Activated CD8-positive, alpha-beta memory T cell treated with anti-CD3 and anti-CD28 coated beads, Interleukin-2, amount 10 ng/mL, durations not matched to agents 7 days and 5 days (primary cell): ENCODE measurements at regions of chr15 and their contacts with region 1.

Region 1: GRCh38 chr15:40857601-40858341 is 13.9 kb downstream of the SPINT1 start:
- DNase-seq: peak; percentile 89
- ATAC-seq: peak; percentile 91
- H3K4me3 Mint-ChIP-seq: no peak overlapping the region
- H3K27ac Mint-ChIP-seq: no peak overlapping the region
- H3K4me1 Mint-ChIP-seq: peaks cover 20% of the 10 kb centered on the region
- H3K27me3 Mint-ChIP-seq: peaks cover 6% of the 10 kb centered on the region

Region 2: GRCh38 chr15:40694688-40695468 is 162.9 kb before region 1 on chr15 and contains the start of gene RAD51:
- CTCF ChIA-PET with region 1: interaction called, 10 read pairs
- DNase-seq: peak; percentile 95
- ATAC-seq: peak; percentile 94
- H3K4me3 Mint-ChIP-seq: peak within 1 kb of the TSS; percentile 98
- H3K27ac Mint-ChIP-seq: peak within 1 kb of the TSS; percentile 100
- H3K4me1 Mint-ChIP-seq: peaks cover 41% of the 10 kb centered on the region
- H3K27me3 Mint-ChIP-seq: no peaks in the 10 kb centered on the region
- total RNA-seq, gene RAD51: 73.0 to 83.3 TPM

Region 3: DNA sequence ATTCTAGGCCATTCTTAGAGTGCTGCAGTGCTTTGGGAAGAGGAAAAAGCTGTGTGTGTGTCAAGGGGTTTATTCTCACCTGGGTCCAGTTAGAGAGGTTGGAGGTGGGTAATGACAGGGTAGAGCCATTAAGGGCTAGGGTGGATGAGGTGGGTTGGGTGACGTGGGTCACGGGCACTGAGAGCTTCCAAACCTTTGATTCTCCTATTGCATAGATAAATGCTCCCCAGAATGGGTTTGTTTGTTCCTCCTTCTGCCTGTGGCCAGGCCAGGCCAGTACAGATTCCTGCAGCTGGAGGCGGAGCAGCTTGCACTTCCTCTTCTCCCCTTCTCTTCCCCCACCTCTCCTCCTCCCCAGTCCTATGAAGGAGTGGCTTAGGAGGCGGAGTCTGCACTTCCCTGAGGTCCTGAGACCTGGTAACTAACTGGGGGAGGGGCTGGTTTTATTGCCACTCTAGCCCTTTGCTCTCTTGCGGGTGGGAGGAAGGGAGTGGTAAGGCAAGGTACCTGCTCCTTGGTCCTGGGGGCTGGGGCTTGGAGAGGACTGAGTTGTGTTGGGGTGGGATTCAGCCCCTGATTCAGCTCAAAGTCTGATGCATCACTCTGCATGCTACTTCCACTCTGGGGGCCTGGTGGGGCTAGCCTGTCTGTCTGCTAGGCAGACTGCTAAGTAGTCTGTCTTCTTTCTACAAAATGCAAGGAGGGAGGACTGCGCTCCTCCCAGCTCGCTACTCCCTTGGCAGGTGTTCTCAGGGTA is 10.4 kb before region 1 on chr15:
- CTCF ChIA-PET with region 1: interaction called, 37 read pairs
- DNase-seq: no peak
- ATAC-seq: no peak
- H3K4me3 Mint-ChIP-seq: no peak overlapping the region
- H3K27ac Mint-ChIP-seq: no peak overlapping the region
- H3K4me1 Mint-ChIP-seq: peaks cover 25% of the 10 kb centered on the region
- H3K27me3 Mint-ChIP-seq: peaks cover 16% of the 10 kb centered on the region

Region 4: GRCh38 chr15:40881351-40881750 is 23.6 kb after region 1 on chr15:
- CTCF ChIA-PET with region 1: interaction called, 180 read pairs
- DNase-seq: no peak
- ATAC-seq: no peak
- H3K4me3 Mint-ChIP-seq: no peak overlapping the region
- H3K27ac Mint-ChIP-seq: no peak overlapping the region
- H3K4me1 Mint-ChIP-seq: peaks cover 27% of the 10 kb centered on the region
- H3K27me3 Mint-ChIP-seq: peaks cover 2% of the 10 kb centered on the region

Region 5: DNA sequence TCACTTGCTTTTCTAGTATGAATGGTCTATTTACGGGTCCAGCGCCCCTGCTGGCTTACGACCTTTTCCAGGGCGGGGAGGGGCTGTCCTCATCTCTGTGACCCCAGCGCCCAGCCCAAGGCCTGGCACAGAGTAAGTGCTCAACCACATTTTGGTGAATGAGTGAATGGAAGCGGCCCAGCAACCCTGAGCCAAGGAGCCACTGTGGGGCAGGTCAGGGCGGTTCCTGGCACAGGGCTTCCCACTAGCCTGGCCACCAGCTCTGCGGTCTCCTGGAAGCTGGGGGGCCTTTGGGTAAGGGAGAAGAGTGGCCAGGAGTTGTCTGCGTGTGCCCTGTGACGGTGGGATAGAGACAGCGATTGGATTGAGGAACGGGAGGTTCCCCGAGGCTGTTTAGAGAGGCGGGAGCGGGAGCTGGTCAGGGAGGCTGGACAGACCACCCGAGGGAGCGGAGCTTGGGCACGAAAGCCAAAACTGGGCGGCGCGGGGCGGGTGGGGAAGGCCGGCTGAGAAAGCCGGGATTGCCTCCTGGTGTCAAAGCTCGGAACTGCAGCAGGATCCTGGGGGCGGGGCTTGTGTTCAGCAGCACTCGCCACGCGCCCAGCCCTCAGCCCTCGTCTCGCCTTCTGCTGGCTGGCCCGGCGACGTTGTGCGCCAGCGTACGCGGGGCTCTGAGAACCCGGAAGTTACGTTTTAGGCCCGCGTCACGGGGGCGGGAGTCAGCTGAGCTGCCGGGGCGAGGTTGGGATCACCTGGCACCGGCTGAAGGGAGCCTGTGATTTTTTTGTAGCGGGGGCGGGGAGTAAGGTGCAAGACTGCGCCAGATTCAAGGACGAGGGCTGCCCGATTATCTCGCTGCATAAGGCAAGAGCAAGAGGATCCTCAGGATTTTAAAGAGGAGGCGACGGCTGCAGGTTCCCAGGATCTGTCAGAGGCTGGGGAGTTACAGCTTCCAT is 36.2 kb after region 1 on chr15 and contains the start of gene VPS18:
- CTCF ChIA-PET with region 1: interaction called, 406 read pairs
- DNase-seq: peak; percentile 99
- ATAC-seq: peak; percentile 98
- H3K4me3 Mint-ChIP-seq: peak within 1 kb of the TSS; percentile 98
- H3K27ac Mint-ChIP-seq: peak within 1 kb of the TSS; percentile 94
- H3K4me1 Mint-ChIP-seq: peaks cover 32% of the 10 kb centered on the region
- H3K27me3 Mint-ChIP-seq: no peaks in the 10 kb centered on the region
- total RNA-seq, gene VPS18: 16.9 to 19.5 TPM

Region 6: GRCh38 chr15:41022487-41023090 is 164.8 kb after region 1 on chr15:
- CTCF ChIA-PET with region 1: interaction called, 10 read pairs
- DNase-seq: peak; percentile 58
- ATAC-seq: no peak
- H3K4me3 Mint-ChIP-seq: no peak overlapping the region
- H3K27ac Mint-ChIP-seq: no peak overlapping the region
- H3K4me1 Mint-ChIP-seq: peaks cover 3% of the 10 kb centered on the region
- H3K27me3 Mint-ChIP-seq: no peaks in the 10 kb centered on the region